ENCODE measurements at regions of chr9 and their contacts with region 1.

Region 1: GRCh38 chr9:99266255-99267023 is 44.4 kb downstream of the SEC61B start:
- DNase-seq: peak; percentile 12 to 65 (median 34)
- ATAC-seq: peak; percentile 84
- H3K4me3 ChIP-seq: no peak overlapping the region
- H3K4me3 Mint-ChIP-seq: peak overlapping the region in 6 of 10 donors; percentile 1 to 42 (median 13)
- H3K27ac ChIP-seq: no peak overlapping the region
- H3K27ac Mint-ChIP-seq: peak overlapping the region in 1 of 9 donors; percentile 23
- H3K4me1 ChIP-seq: peaks cover 0 to 4% of the 10 kb centered on the region in 2 donors
- H3K4me1 Mint-ChIP-seq: peaks cover 0 to 13% (median 10%) of the 10 kb centered on the region in 7 donors
- H3K27me3 ChIP-seq: no peaks in the 10 kb centered on the region
- H3K27me3 Mint-ChIP-seq: peaks cover 0 to 14% (median 6%) of the 10 kb centered on the region in 5 donors

Region 2: GRCh38 chr9:99221621-99222415 is 44.6 kb before region 1 on chr9 and contains the starts of genes ALG2 and SEC61B:
- CTCF ChIA-PET with region 1: no interaction called
- POLR2A ChIA-PET with region 1: no interaction called
- intact Hi-C with region 1: no loop called
- DNase-seq: peak; percentile 86 to 94 (median 91)
- ATAC-seq: peak; percentile 93
- H3K4me3 ChIP-seq: peak within 1 kb of the TSS; percentile 90
- H3K4me3 Mint-ChIP-seq: peak within 1 kb of the TSS; percentile 92 to 100 (median 99)
- H3K27ac ChIP-seq: peak within 1 kb of the TSS; percentile 86
- H3K27ac Mint-ChIP-seq: peak within 1 kb of the TSS; percentile 99 to 100 (median 100)
- H3K4me1 ChIP-seq: peaks cover 21 to 29% of the 10 kb centered on the region in 2 donors
- H3K4me1 Mint-ChIP-seq: peaks cover 48 to 91% (median 81%) of the 10 kb centered on the region in 7 donors
- H3K27me3 ChIP-seq: no peaks in the 10 kb centered on the region
- H3K27me3 Mint-ChIP-seq: no peaks in the 10 kb centered on the region
- total RNA-seq, gene ALG2: 13.9 to 33.7 (median 25.2) TPM
- total RNA-seq, gene SEC61B: 50.4 to 165 (median 54.6) TPM

Region 3: GRCh38 chr9:100011062-100011681 is 744.7 kb after region 1 on chr9:
- CTCF ChIA-PET with region 1: no interaction called
- POLR2A ChIA-PET with region 1: no interaction called
- intact Hi-C with region 1: loop called (anchors 1 to 2 kb)
- DNase-seq: peak in 7 of 9 donors; percentile 24 to 63 (median 42)
- ATAC-seq: peak; percentile 67
- H3K4me3 ChIP-seq: no peak overlapping the region
- H3K4me3 Mint-ChIP-seq: no peak overlapping the region
- H3K27ac ChIP-seq: no peak overlapping the region
- H3K27ac Mint-ChIP-seq: no peak overlapping the region
- H3K4me1 ChIP-seq: no peaks in the 10 kb centered on the region
- H3K4me1 Mint-ChIP-seq: peaks cover 0 to 5% (median 0%) of the 10 kb centered on the region in 7 donors
- H3K27me3 ChIP-seq: no peaks in the 10 kb centered on the region
- H3K27me3 Mint-ChIP-seq: no peaks in the 10 kb centered on the region

Measured in naive thymus-derived CD4-positive, alpha-beta T cell (primary cell).